GM12878 (cell line): ENCODE measurements at regions of chr5 and their contacts with region 1.

Region 1: GRCh38 chr5:116361171-116361967 is 213.3 kb downstream of the SEMA6A start:
- DNase-seq: no peak
- ATAC-seq: no peak
- H3K4me3 ChIP-seq: no peak overlapping the region
- H3K27ac ChIP-seq: no peak overlapping the region
- H3K4me1 ChIP-seq: peaks cover 38% of the 10 kb centered on the region
- H3K27me3 ChIP-seq: no peaks in the 10 kb centered on the region
- CTCF ChIP-seq: no peak
- EP300 ChIP-seq: no peak
- POLR2A ChIP-seq: no peak
- RAD21 ChIP-seq: no peak

Region 2: GRCh38 chr5:116273448-116274207 is 87.7 kb before region 1 on chr5:
- CTCF ChIA-PET with region 1: interaction called, 28 read pairs
- POLR2A ChIA-PET with region 1: interaction called, 7 read pairs
- RAD21 ChIA-PET with region 1: interaction called, 37 read pairs
- SMC1A ChIA-PET with region 1: interaction called, 49 read pairs
- in situ Hi-C with region 1: no loop called
- intact Hi-C with region 1: loop called (anchors 5 kb)
- DNase-seq: peak; percentile 43
- ATAC-seq: peak; percentile 90
- H3K4me3 ChIP-seq: no peak overlapping the region
- H3K27ac ChIP-seq: no peak overlapping the region
- H3K4me1 ChIP-seq: no peaks in the 10 kb centered on the region
- H3K27me3 ChIP-seq: no peaks in the 10 kb centered on the region
- CTCF ChIP-seq: no peak
- EP300 ChIP-seq: peak; percentile 36 to 68; a peak in 1 of 4 replicates
- POLR2A ChIP-seq: no peak
- RAD21 ChIP-seq: no peak

Region 3: GRCh38 chr5:116343961-116344360 is 17.4 kb before region 1 on chr5:
- CTCF ChIA-PET with region 1: interaction called, 9 read pairs
- POLR2A ChIA-PET with region 1: interaction called, 9 read pairs
- RAD21 ChIA-PET with region 1: interaction called, 4 read pairs
- SMC1A ChIA-PET with region 1: interaction called, 37 read pairs
- in situ Hi-C with region 1: no loop called
- intact Hi-C with region 1: no loop called
- DNase-seq: no peak
- ATAC-seq: no peak
- H3K4me3 ChIP-seq: no peak overlapping the region
- H3K27ac ChIP-seq: no peak overlapping the region
- H3K4me1 ChIP-seq: no peaks in the 10 kb centered on the region
- H3K27me3 ChIP-seq: no peaks in the 10 kb centered on the region
- CTCF ChIP-seq: no peak
- EP300 ChIP-seq: no peak
- POLR2A ChIP-seq: no peak
- RAD21 ChIP-seq: no peak

Region 4: DNA sequence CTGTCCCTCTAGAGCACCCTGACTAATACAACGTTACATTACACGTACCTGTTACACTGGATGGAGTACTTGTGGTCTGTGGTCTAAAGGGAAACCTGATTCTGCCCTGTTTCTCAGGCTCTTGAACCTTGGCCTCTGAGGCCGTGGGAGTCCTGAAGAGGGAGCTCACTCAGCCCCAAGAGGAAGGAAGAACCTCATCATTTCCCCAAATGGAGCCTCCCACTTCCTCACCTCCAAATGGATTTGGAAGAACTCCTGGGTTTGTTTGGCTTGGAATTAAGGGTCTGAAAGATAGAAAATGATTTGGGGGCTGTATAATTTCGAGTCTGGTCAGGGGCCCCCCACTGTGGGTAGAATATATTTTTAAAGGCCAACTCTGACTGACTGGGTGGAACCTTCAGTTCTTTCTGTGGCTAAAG is 13.1 kb after region 1 on chr5:
- CTCF ChIA-PET with region 1: interaction called, 101 read pairs
- POLR2A ChIA-PET with region 1: interaction called, 98 read pairs
- RAD21 ChIA-PET with region 1: interaction called, 229 read pairs
- SMC1A ChIA-PET with region 1: interaction called, 307 read pairs
- in situ Hi-C with region 1: no loop called
- intact Hi-C with region 1: no loop called
- DNase-seq: peak; percentile 64
- ATAC-seq: peak; percentile 82
- H3K4me3 ChIP-seq: no peak overlapping the region
- H3K27ac ChIP-seq: no peak overlapping the region
- H3K4me1 ChIP-seq: peaks cover 7% of the 10 kb centered on the region
- H3K27me3 ChIP-seq: no peaks in the 10 kb centered on the region
- CTCF ChIP-seq: no peak
- EP300 ChIP-seq: 0 out of 4 replicates have a peak, but pooled peaks of 1 of the 2 experiments have one; percentile 22
- POLR2A ChIP-seq: no peak
- RAD21 ChIP-seq: no peak

Region 5: GRCh38 chr5:116442095-116442534 is 80.7 kb after region 1 on chr5:
- CTCF ChIA-PET with region 1: interaction called, 4 read pairs
- POLR2A ChIA-PET with region 1: interaction called, 4 read pairs
- RAD21 ChIA-PET with region 1: interaction called, 9 read pairs
- SMC1A ChIA-PET with region 1: interaction called, 17 read pairs
- in situ Hi-C with region 1: no loop called
- intact Hi-C with region 1: no loop called
- DNase-seq: no peak
- ATAC-seq: no peak
- H3K4me3 ChIP-seq: no peak overlapping the region
- H3K27ac ChIP-seq: no peak overlapping the region
- H3K4me1 ChIP-seq: peaks cover 4% of the 10 kb centered on the region; the same call in 1 of the 2 replicates
- H3K27me3 ChIP-seq: no peaks in the 10 kb centered on the region
- CTCF ChIP-seq: no peak
- EP300 ChIP-seq: no peak
- POLR2A ChIP-seq: no peak
- RAD21 ChIP-seq: no peak

Region 6: GRCh38 chr5:116454417-116454927 is 93.1 kb after region 1 on chr5:
- CTCF ChIA-PET with region 1: no interaction called
- POLR2A ChIA-PET with region 1: interaction called, 3 read pairs
- RAD21 ChIA-PET with region 1: interaction called, 7 read pairs
- SMC1A ChIA-PET with region 1: interaction called, 25 read pairs
- in situ Hi-C with region 1: no loop called
- intact Hi-C with region 1: no loop called
- DNase-seq: peak; percentile 63
- ATAC-seq: peak; percentile 97
- H3K4me3 ChIP-seq: no peak overlapping the region
- H3K27ac ChIP-seq: no peak overlapping the region
- H3K4me1 ChIP-seq: peaks cover 10% of the 10 kb centered on the region
- H3K27me3 ChIP-seq: no peaks in the 10 kb centered on the region
- CTCF ChIP-seq: no peak
- EP300 ChIP-seq: no peak
- POLR2A ChIP-seq: no peak
- RAD21 ChIP-seq: 0 out of 2 replicates have a peak, but pooled peaks have one; percentile 3